Activated T-helper 2 cell treated with anti-CD3 and anti-CD28 coated beads, Interferon-gamma antibody, Interleukin-2, Interleukin-4, amounts not matched to agents 10 μg/mL and 5 μg/mL and 100 μg/mL, durations not matched to agents 14 hours and 24 hours and 36 hours (primary cell): ENCODE measurements at regions of chr7 and their contacts with region 1.

Region 1: GRCh38 chr7:84985073-84985784 is 201.6 kb downstream of the SEMA3D start:
- DNase-seq: no peak
- H3K4me3 Mint-ChIP-seq: no peak overlapping the region
- H3K27ac Mint-ChIP-seq: no peak overlapping the region
- H3K4me1 Mint-ChIP-seq: no peaks in the 10 kb centered on the region
- H3K27me3 Mint-ChIP-seq: no peaks in the 10 kb centered on the region

Region 2: GRCh38 chr7:84675633-84676034 is 309.6 kb before region 1 on chr7:
- intact Hi-C with region 1: loop called (anchors 10 kb)
- DNase-seq: no peak
- H3K4me3 Mint-ChIP-seq: no peak overlapping the region
- H3K27ac Mint-ChIP-seq: no peak overlapping the region
- H3K4me1 Mint-ChIP-seq: peaks cover 18% of the 10 kb centered on the region
- H3K27me3 Mint-ChIP-seq: no peaks in the 10 kb centered on the region